SK-N-SH (cell line): ENCODE measurements at regions of chr10 and their contacts with region 1.

Region 1: GRCh38 chr10:86376852-86377796 is 10.5 kb upstream of the GRID1 start:
- DNase-seq: peak; percentile 94
- H3K4me3 ChIP-seq: peak overlapping the region in 1 of 2 experiments; percentile 37; a peak in 2 of 4 replicates
- H3K27ac ChIP-seq: no peak overlapping the region
- H3K4me1 ChIP-seq: no peaks in the 10 kb centered on the region; a peak in 1 of 4 replicates
- H3K27me3 ChIP-seq: peaks cover 14% of the 10 kb centered on the region
- CTCF ChIP-seq: peak; percentile 93
- EP300 ChIP-seq: no peak
- RAD21 ChIP-seq: peak; percentile 94

Region 2: GRCh38 chr10:86085136-86085535 is 292.0 kb before region 1 on chr10:
- CTCF ChIA-PET with region 1: no interaction called
- POLR2A ChIA-PET with region 1: no interaction called
- DNase-seq: no peak
- H3K4me3 ChIP-seq: no peak overlapping the region
- H3K27ac ChIP-seq: no peak overlapping the region
- H3K4me1 ChIP-seq: no peaks in the 10 kb centered on the region
- H3K27me3 ChIP-seq: no peaks in the 10 kb centered on the region
- CTCF ChIP-seq: no peak
- EP300 ChIP-seq: no peak
- RAD21 ChIP-seq: no peak

Region 3: GRCh38 chr10:86330778-86331763 is 46.1 kb before region 1 on chr10:
- CTCF ChIA-PET with region 1: no interaction called
- POLR2A ChIA-PET with region 1: no interaction called
- DNase-seq: no peak
- H3K4me3 ChIP-seq: no peak overlapping the region
- H3K27ac ChIP-seq: no peak overlapping the region
- H3K4me1 ChIP-seq: peaks cover 0 to 14% of the 10 kb centered on the region in 2 experiments; a peak in 1 of 4 replicates
- H3K27me3 ChIP-seq: no peaks in the 10 kb centered on the region
- CTCF ChIP-seq: no peak
- EP300 ChIP-seq: no peak
- RAD21 ChIP-seq: peak; percentile 56

Region 4: GRCh38 chr10:86366033-86366901 is 10.9 kb before region 1 on chr10 and contains the start of gene GRID1:
- CTCF ChIA-PET with region 1: interaction called, 15 read pairs
- POLR2A ChIA-PET with region 1: no interaction called
- DNase-seq: peak; percentile 98
- H3K4me3 ChIP-seq: peak within 1 kb of the TSS; percentile 49 to 51; a peak in 3 of 4 replicates
- H3K27ac ChIP-seq: no peak within 1 kb of the TSS
- H3K4me1 ChIP-seq: peaks cover 0 to 15% of the 10 kb centered on the region in 2 experiments; a peak in 1 of 4 replicates
- H3K27me3 ChIP-seq: peaks cover 28% of the 10 kb centered on the region
- CTCF ChIP-seq: no peak
- EP300 ChIP-seq: no peak
- RAD21 ChIP-seq: no peak
- polyA plus RNA-seq, gene GRID1: 0.13 and 0.24 TPM in 2 replicates

Region 5: DNA sequence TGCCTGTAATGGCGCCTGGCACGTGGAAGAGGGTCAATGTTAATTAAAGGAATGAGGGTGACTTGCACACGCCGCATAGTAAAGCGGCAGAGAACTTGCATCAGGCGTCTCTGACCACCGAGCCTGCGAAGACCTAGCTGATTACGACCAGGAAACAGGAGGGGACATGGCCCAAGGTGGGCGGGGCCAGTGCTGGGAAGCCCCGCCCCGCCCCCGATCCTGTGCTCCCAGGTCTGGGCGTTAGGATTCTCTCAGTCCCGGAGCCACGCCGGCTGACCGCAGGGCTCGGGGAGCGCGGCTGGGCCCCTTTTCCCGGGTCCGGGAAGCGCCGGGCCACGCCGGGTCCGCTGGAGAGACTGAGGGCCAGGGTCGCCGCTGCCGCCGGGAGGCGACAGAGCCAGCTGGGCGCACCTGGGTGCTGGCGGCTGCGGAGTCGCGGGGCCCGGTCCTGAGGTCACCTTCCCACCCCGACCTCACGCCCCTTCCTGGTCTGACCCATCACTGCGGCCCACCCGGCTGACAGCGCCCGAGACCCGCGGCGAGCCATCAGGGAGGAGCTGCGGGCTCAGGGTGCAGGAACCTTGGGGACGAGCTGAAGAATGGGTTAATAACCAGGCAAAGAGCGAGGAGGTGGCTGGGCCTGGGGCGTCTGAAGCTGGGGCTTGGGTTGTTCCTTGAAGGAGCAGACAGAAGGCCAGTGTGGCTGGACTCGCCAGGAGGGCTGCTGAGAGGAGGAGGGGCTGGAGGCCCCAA is 12.5 kb after region 1 on chr10:
- CTCF ChIA-PET with region 1: interaction called, 12 read pairs
- POLR2A ChIA-PET with region 1: no interaction called
- DNase-seq: no peak
- H3K4me3 ChIP-seq: no peak overlapping the region
- H3K27ac ChIP-seq: no peak overlapping the region
- H3K4me1 ChIP-seq: no peaks in the 10 kb centered on the region
- H3K27me3 ChIP-seq: no peaks in the 10 kb centered on the region
- CTCF ChIP-seq: no peak
- EP300 ChIP-seq: no peak
- RAD21 ChIP-seq: no peak